ENCODE measurements at regions of chr9 and their contacts with region 1.

Region 1: GRCh38 chr9:109182940-109183798 is 16.1 kb upstream of the FRRS1L start:
- DNase-seq: peak; percentile 29
- H3K4me3 ChIP-seq: no peak overlapping the region
- H3K27ac ChIP-seq: no peak overlapping the region
- H3K4me1 ChIP-seq: no peaks in the 10 kb centered on the region
- H3K27me3 ChIP-seq: peaks cover 2 to 3% of the 10 kb centered on the region in 2 experiments
- CTCF ChIP-seq: peak; percentile 37 to 44
- POLR2A ChIP-seq: no peak

Region 2: DNA sequence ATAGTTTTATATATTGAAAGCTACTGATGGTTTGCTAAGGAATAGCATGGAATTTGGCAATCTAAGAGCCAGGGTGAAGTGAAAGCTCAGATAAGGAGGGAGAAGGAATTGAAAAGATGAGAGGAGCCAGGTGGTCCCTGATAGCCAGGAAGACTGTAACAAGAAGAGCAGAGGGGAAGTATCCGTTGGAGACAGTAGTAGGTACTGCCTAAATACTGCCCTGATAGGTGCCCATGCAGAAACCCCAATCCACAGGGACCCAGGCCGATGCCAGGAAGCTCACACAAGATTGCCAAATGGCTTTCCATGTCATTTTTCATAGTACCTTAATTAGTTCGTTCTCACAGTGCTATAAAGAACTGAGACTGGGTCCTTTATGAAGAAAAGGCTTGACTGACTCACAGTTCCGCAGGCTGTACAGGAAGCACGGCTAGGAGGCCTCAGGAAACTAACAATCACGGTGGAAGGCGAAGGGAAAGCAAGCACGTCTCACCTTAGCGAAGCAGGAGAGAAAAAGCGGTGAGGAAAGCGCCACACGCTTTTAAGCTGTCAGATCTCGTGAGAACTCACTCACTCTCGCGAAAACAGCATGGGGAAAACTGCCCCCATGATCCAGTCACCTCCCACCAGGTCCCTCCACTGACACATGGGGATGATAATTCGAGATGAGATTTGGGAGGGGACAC is 340.4 kb before region 1 on chr9:
- CTCF ChIA-PET with region 1: no interaction called
- POLR2A ChIA-PET with region 1: no interaction called
- dilution Hi-C with region 1: no loop called
- intact Hi-C with region 1: no loop called
- DNase-seq: peak; percentile 76
- H3K4me3 ChIP-seq: no peak overlapping the region
- H3K27ac ChIP-seq: peak overlapping the region; percentile 43
- H3K4me1 ChIP-seq: peaks cover 16% of the 10 kb centered on the region
- H3K27me3 ChIP-seq: no peaks in the 10 kb centered on the region
- CTCF ChIP-seq: no peak
- POLR2A ChIP-seq: no peak

Region 3: GRCh38 chr9:109171926-109172325 is 11.2 kb before region 1 on chr9:
- CTCF ChIA-PET with region 1: interaction called, 10 read pairs
- POLR2A ChIA-PET with region 1: no interaction called
- dilution Hi-C with region 1: no loop called
- intact Hi-C with region 1: no loop called
- DNase-seq: no peak
- H3K4me3 ChIP-seq: no peak overlapping the region
- H3K27ac ChIP-seq: no peak overlapping the region
- H3K4me1 ChIP-seq: no peaks in the 10 kb centered on the region
- H3K27me3 ChIP-seq: peaks cover 13 to 15% of the 10 kb centered on the region in 2 experiments
- CTCF ChIP-seq: no peak
- POLR2A ChIP-seq: no peak

Region 4: DNA sequence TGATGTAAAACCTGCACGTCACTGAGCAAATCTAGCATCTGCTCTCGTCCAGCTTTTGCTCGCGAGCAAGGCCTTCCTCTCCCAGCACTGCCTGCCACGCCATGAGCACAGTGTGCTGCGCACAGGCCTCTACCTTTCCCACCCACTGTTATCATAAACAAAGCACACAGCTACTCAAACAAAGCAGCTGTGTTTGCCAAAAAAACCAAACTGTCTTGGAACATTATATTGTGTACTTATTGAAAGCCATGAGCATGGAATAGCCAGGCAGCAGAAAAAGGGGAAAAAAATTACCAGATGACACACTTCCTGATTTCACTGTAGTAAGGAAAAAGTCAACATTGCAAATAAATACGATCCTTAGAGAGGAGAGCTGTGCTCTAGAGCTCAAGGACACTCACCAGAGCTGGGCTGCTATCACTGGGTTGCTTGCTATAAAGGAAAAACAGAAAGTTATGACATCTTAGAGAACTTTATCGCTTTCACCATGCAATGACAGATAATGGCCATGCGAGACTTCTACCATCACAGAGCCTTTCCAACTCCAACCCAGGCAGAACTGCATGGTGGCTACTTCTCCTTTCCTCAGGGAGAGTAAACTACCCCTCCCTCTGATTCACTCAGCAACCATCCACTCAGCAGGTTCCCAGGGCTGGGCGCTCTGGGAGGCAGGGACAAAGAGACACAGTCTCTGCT is 68.1 kb after region 1 on chr9:
- CTCF ChIA-PET with region 1: interaction called, 5 read pairs
- POLR2A ChIA-PET with region 1: no interaction called
- dilution Hi-C with region 1: no loop called
- intact Hi-C with region 1: loop called (anchors 5 kb)
- DNase-seq: peak; percentile 92
- H3K4me3 ChIP-seq: no peak overlapping the region
- H3K27ac ChIP-seq: peak overlapping the region; percentile 14
- H3K4me1 ChIP-seq: peaks cover 14% of the 10 kb centered on the region
- H3K27me3 ChIP-seq: no peaks in the 10 kb centered on the region
- CTCF ChIP-seq: no peak
- POLR2A ChIP-seq: no peak

Region 5: GRCh38 chr9:109463924-109464625 is 280.9 kb after region 1 on chr9:
- CTCF ChIA-PET with region 1: no interaction called
- POLR2A ChIA-PET with region 1: no interaction called
- dilution Hi-C with region 1: no loop called
- intact Hi-C with region 1: loop called (anchors 1 kb)
- DNase-seq: no peak
- H3K4me3 ChIP-seq: no peak overlapping the region
- H3K27ac ChIP-seq: no peak overlapping the region
- H3K4me1 ChIP-seq: no peaks in the 10 kb centered on the region
- H3K27me3 ChIP-seq: peaks cover 33 to 52% of the 10 kb centered on the region in 2 experiments
- CTCF ChIP-seq: no peak
- POLR2A ChIP-seq: no peak

Measured in endothelial cell of umbilical vein (primary cell).